ENCODE measurements at regions of chr7 and their contacts with region 1.

Region 1: GRCh38 chr7:91089382-91089963 is 174.8 kb upstream of the FZD1 start:
- DNase-seq: no peak
- ATAC-seq: peak; percentile 33 to 66 (median 61)
- H3K4me3 ChIP-seq: peak overlapping the region in 9 of 12 donors; percentile 15 to 42 (median 33)
- H3K27ac ChIP-seq: peak overlapping the region in 7 of 12 donors; percentile 0 to 47 (median 36)
- H3K4me1 ChIP-seq: peaks cover 0 to 22% (median 7%) of the 10 kb centered on the region in 12 donors
- H3K27me3 ChIP-seq: no peaks in the 10 kb centered on the region
- CTCF ChIP-seq: peak; percentile 62 to 91 (median 77)
- POLR2A ChIP-seq: no peak

Region 2: DNA sequence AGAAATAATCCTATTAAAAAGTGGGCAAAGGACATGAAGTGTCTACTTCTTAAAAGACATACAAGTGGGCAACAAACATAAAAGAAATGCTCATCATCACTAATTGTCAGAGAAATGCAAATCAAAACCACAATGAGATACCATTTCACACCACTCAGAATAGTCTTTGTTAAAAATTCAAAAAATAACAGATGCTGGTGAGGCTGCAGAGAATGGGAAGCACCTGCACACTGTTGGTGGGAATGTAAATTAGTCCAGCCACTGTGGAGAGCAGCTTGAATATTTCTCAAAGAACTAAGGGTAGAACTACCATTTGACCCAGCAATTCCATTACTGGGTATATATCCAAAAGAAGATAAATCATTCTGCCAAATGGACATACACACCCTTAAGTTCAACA is 997.0 kb before region 1 on chr7:
- intact Hi-C with region 1: no loop called
- DNase-seq: no peak
- ATAC-seq: no peak
- H3K4me3 ChIP-seq: no peak overlapping the region
- H3K27ac ChIP-seq: no peak overlapping the region
- H3K4me1 ChIP-seq: no peaks in the 10 kb centered on the region
- H3K27me3 ChIP-seq: no peaks in the 10 kb centered on the region
- CTCF ChIP-seq: no peak
- POLR2A ChIP-seq: no peak

Region 3: DNA sequence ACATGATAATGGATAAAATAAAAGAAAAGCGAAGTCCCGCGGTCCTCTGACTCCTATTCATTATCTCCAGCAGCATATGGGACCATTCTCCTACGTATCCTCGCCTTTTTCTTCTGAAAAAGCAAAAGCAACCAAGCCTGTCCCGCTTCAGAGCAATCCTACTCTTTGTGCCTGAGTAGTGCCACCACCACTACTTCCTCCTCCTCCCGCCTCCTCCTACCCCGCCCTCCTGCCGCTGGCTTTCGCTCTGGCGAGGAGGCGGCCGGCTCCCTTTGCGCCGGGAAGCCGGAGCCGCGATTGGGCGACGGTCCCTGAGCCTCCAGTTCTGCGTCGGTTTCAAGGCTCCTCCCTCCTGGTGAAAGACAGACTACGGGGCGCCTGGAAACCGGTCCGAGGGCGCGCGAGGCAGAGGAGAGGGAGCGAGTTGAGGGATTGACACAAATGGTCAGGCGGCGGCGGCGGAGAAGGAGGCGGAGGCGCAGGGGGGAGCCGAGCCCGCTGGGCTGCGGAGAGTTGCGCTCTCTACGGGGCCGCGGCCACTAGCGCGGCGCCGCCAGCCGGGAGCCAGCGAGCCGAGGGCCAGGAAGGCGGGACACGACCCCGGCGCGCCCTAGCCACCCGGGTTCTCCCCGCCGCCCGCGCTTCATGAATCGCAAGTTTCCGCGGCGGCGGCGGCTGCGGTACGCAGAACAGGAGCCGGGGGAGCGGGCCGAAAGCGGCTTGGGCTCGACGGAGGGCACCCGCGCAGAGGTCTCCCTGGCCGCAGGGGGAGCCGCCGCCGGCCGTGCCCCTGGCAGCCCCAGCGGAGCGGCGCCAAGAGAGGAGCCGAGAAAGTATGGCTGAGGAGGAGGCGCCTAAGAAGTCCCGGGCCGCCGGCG is 174.8 kb after region 1 on chr7 and contains the start of gene FZD1:
- intact Hi-C with region 1: loop called (anchors 1 to 10 kb)
- DNase-seq: peak; percentile 97 to 98 (median 97)
- ATAC-seq: peak; percentile 95 to 97 (median 97)
- H3K4me3 ChIP-seq: peak within 1 kb of the TSS; percentile 77 to 95 (median 86)
- H3K27ac ChIP-seq: peak within 1 kb of the TSS; percentile 91 to 97 (median 95)
- H3K4me1 ChIP-seq: peaks cover 0 to 35% (median 18%) of the 10 kb centered on the region in 12 donors
- H3K27me3 ChIP-seq: peaks cover 0 to 15% (median 0%) of the 10 kb centered on the region in 9 donors
- CTCF ChIP-seq: peak in 3 of 12 donors; percentile 5 to 30 (median 19)
- POLR2A ChIP-seq: peak in 1 of 2 donors; percentile 87
- total RNA-seq, gene FZD1: 11.5 to 29.8 (median 17.9) TPM

Region 4: GRCh38 chr7:91473619-91474018 is 384.1 kb after region 1 on chr7:
- intact Hi-C with region 1: no loop called
- DNase-seq: no peak
- ATAC-seq: no peak
- H3K4me3 ChIP-seq: no peak overlapping the region
- H3K27ac ChIP-seq: no peak overlapping the region
- H3K4me1 ChIP-seq: no peaks in the 10 kb centered on the region
- H3K27me3 ChIP-seq: no peaks in the 10 kb centered on the region
- CTCF ChIP-seq: no peak
- POLR2A ChIP-seq: no peak

Region 5: DNA sequence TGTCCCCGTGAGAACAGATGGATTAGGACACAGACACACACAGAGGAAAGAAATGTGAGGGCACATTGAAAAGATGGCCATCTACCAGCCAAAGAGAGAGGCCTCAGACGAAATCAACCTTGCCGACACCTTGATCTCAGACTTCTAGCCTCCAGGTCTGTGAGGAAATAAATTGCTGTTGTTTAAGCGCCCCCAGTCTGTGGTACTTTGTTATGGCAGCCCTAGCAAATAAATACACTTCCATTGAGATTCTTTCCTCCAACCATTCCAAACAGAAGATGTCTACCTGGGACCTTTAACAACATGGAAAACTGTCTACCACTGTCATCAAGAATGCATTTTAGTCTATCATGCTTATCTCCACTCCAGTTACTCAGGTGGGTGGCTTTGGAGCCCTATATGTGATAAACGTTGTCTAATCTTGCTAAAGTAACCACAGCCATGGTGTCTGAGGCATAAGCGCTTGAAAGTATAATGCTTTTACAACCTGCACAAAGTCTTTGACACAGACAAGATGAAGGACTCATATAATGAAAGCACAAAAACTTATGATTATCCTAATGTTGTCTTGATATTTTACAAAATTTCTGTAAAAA is 546.8 kb after region 1 on chr7:
- intact Hi-C with region 1: loop called (anchors 5 to 10 kb)
- DNase-seq: no peak
- ATAC-seq: peak in 1 of 4 donors; percentile 20
- H3K4me3 ChIP-seq: no peak overlapping the region
- H3K27ac ChIP-seq: no peak overlapping the region
- H3K4me1 ChIP-seq: peaks cover 0 to 14% (median 0%) of the 10 kb centered on the region in 12 donors
- H3K27me3 ChIP-seq: no peaks in the 10 kb centered on the region
- CTCF ChIP-seq: peak; percentile 34 to 66 (median 56)
- POLR2A ChIP-seq: no peak

Region 6: GRCh38 chr7:91683823-91684222 is 594.4 kb after region 1 on chr7:
- intact Hi-C with region 1: no loop called
- DNase-seq: peak in 3 of 5 donors; percentile 27 to 32 (median 29)
- ATAC-seq: peak; percentile 74 to 94 (median 83)
- H3K4me3 ChIP-seq: no peak overlapping the region
- H3K27ac ChIP-seq: no peak overlapping the region
- H3K4me1 ChIP-seq: peaks cover 0 to 10% (median 0%) of the 10 kb centered on the region in 12 donors
- H3K27me3 ChIP-seq: no peaks in the 10 kb centered on the region
- CTCF ChIP-seq: no peak
- POLR2A ChIP-seq: no peak

Region 7: DNA sequence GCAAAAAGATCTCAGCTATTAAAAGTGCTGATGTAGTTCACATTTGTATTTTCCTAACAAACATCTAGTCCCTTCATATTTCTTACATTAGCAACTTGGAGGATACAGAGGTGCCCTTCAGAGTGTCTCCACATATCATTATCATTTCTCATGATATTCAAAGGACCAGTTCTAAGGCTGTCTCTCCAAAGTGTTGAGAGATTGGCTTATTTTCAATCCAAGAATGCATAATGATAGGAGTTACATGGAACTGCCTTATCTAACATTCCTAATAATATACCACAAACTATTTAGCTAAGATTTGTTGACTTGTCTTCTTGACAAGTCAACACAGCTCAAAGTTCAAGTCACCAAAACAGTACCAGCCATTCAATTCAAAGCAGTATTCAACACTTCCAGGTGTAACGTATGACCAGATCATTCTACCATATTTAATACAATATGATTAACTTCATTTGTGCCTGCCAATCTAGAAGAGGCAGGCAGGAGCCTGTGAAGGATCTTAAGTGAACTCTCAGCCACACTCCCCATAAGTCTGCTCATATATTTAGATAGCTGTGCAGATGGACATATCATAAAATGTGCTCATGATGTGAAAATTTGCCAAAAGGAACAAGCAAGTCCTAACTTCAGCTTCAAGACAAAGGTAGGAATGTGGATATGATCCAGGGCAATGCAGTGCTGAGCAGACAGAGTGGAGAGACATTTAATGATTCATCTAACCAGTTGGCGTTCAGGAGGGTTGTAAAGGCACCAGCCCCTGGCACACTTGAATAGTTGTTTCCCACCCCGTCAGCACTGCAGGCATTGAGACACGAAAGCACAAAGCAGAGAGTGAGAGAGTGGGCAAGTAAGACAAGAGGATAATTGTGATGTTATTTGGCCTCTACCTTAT is 682.7 kb after region 1 on chr7:
- intact Hi-C with region 1: loop called in 1 of 10 experiments (anchors 5 kb)
- DNase-seq: no peak
- ATAC-seq: peak; percentile 38 to 81 (median 56)
- H3K4me3 ChIP-seq: no peak overlapping the region
- H3K27ac ChIP-seq: peak overlapping the region in 6 of 12 donors; percentile 6 to 41 (median 26)
- H3K4me1 ChIP-seq: peaks cover 0 to 18% (median 3%) of the 10 kb centered on the region in 12 donors
- H3K27me3 ChIP-seq: no peaks in the 10 kb centered on the region
- CTCF ChIP-seq: no peak
- POLR2A ChIP-seq: no peak

Region 8: DNA sequence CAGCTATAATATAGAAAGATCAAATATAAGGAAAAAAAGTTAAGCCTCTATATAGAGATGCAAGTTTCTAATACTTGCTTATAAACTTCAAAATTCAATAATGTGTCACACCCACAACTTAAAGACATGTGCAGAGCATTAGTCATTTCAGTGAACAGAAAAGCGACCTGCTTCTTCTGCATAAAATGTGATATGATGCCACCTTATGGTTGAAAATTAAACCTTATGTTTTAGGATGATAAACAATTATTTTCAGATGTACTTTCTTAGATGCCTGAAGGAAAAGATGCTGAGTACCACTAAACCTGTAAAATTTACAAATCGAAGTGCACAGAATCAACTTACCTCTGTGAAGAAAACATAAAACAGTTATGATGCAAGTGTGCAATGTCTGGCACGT is 695.0 kb after region 1 on chr7:
- intact Hi-C with region 1: loop called in 9 of 10 experiments (anchors 5 to 10 kb)
- DNase-seq: no peak
- ATAC-seq: peak in 1 of 4 donors; percentile 60
- H3K4me3 ChIP-seq: no peak overlapping the region
- H3K27ac ChIP-seq: no peak overlapping the region
- H3K4me1 ChIP-seq: no peaks in the 10 kb centered on the region
- H3K27me3 ChIP-seq: no peaks in the 10 kb centered on the region
- CTCF ChIP-seq: peak in 11 of 12 donors; percentile 8 to 62 (median 41)
- POLR2A ChIP-seq: no peak